Activated T-helper 1 cell treated with anti-CD3 and anti-CD28 coated beads, Interleukin-12 subunit alpha, Interleukin-12 subunit beta, Interleukin-2, Interleukin-4 antibody, amounts not matched to agents 30 ng/mL and 10 ng/mL and 1 ng/mL, durations not matched to agents 14 hours and 24 hours and 36 hours (primary cell): ENCODE measurements at regions of chr12 and their contacts with region 1.

Region 1: GRCh38 chr12:100200463-100201181 is at the start of gene ACTR6:
- DNase-seq: peak; percentile 94
- H3K4me3 Mint-ChIP-seq: peak within 1 kb of the TSS; percentile 100
- H3K27ac Mint-ChIP-seq: peak within 1 kb of the TSS; percentile 100
- H3K4me1 Mint-ChIP-seq: peaks cover 39% of the 10 kb centered on the region
- H3K27me3 Mint-ChIP-seq: no peaks in the 10 kb centered on the region
- total RNA-seq, gene ACTR6: 29.8 and 35.4 TPM in 2 replicates

Region 2: DNA sequence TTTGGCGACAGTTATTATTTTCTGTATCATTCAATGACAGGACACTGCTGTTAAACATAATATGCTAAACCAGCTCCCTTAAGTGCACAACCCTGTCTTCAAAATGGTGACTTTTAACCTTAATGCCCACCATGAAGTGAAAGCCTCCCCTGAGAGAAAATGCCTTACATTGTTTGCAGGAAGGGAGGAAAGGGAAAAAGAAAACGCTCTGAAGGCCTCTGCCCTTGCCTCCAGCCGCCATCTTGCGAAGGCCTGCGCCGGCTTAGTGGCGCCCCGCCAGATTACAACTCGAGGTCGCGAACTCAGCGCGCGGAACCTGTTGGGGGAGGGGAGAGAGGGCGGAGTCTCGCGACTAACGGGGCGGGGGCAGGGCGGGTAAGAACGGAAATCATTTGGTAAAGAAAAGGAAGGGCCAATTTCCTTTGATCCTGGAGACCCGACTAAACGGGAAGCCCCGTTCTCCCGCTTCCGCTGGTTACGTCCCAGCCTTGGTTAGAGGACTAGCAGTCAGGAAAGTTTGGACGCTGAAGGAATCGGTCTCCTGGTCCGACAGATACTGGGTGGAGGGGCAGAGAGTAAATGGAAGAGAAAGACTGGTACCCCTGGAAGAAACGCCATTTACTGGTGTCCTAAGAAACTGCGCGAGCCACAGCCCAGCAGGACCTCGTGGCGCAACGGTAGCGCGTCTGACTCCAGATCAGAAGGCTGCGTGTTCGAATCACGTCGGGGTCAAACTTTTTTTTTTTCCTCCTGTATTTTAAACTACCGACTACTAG is 1696.8 kb before region 1 on chr12:
- intact Hi-C with region 1: loop called (anchors 5 kb)
- DNase-seq: peak; percentile 90
- H3K4me3 Mint-ChIP-seq: peak overlapping the region; percentile 91
- H3K27ac Mint-ChIP-seq: peak overlapping the region; percentile 99
- H3K4me1 Mint-ChIP-seq: peaks cover 27% of the 10 kb centered on the region
- H3K27me3 Mint-ChIP-seq: peaks cover 8% of the 10 kb centered on the region

Region 3: DNA sequence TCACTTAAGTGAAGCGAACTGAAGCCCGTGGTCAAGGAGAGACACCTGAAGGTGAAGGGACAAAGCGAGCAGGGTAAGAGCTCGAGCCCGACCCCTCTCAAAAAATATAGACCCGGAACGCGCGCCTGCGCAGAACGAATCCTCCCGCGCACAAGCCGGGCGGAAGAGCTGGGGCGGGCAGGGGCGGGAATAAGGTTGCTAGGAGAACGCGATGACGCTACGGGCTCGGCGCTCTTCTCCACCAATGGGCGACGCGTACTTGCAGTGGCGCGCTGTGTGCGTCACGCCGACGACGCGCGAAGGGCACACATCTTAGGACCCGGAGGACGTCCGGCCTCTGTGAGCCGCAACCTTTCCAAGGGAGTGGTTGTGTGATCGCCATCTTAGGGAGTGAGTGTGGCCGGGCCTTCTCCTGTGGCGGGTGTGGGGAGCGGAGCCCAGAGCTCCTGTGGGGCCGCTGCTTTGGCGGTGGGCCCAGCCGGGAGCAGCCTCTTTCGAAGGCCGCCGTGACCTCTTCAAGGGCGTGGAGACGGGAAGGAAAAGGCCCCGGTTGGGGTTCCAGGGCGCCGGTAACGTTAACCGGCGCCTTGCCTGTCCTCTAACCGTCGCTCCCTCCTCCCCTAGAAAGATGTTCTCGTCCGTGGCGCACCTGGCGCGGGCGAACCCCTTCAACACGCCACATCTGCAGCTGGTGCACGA is 1607.1 kb before region 1 on chr12 and contains the start of gene SLC25A3:
- intact Hi-C with region 1: loop called (anchors 1 kb)
- DNase-seq: peak; percentile 92
- H3K4me3 Mint-ChIP-seq: peak within 1 kb of the TSS; percentile 96
- H3K27ac Mint-ChIP-seq: peak within 1 kb of the TSS; percentile 99
- H3K4me1 Mint-ChIP-seq: peaks cover 29% of the 10 kb centered on the region
- H3K27me3 Mint-ChIP-seq: no peaks in the 10 kb centered on the region
- total RNA-seq, gene SLC25A3: 570 and 580 TPM in 2 replicates

Region 4: GRCh38 chr12:99352269-99352668 is 848.4 kb before region 1 on chr12:
- intact Hi-C with region 1: no loop called
- DNase-seq: no peak
- H3K4me3 Mint-ChIP-seq: no peak overlapping the region
- H3K27ac Mint-ChIP-seq: no peak overlapping the region
- H3K4me1 Mint-ChIP-seq: no peaks in the 10 kb centered on the region
- H3K27me3 Mint-ChIP-seq: no peaks in the 10 kb centered on the region

Region 5: DNA sequence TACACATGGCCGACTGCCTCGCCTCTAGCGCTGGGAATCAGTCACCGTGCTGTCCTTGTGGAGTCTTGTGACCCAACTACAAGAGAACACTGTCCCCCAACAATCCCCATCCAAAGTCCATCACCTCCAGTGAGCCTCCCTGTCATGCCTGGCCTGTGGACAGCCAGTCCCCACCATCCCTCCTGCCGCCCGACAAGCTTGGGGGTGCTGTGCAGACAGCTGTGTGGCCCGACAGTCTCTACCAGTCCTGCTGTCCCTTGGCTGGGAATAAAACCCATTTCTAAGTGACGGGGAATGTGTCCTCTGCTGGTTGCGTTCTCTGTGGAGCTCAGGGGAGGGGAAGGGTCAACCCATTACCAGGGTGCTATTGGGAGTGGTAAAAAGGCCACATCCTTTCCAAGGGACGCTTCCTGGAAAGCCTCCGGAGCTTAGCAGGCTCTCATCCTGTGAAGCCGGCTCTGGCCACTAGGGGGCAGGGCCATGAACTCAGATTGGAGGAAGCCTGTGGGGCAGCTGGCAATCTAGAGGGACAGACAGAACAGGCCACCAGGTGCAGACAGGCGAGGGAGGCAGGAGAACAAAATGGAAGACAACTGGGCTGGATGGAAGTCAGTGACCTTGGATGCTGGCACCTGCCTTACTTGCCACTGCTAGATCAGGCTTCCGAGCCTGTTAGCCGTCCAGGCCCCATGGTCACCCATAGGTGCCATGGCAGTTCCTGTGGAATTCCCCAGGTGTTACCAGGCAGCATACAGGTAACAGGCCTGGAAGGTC is 46.0 kb before region 1 on chr12:
- intact Hi-C with region 1: loop called (anchors 1 kb)
- DNase-seq: peak; percentile 64
- H3K4me3 Mint-ChIP-seq: no peak overlapping the region
- H3K27ac Mint-ChIP-seq: no peak overlapping the region
- H3K4me1 Mint-ChIP-seq: peaks cover 10% of the 10 kb centered on the region
- H3K27me3 Mint-ChIP-seq: no peaks in the 10 kb centered on the region

Region 6: DNA sequence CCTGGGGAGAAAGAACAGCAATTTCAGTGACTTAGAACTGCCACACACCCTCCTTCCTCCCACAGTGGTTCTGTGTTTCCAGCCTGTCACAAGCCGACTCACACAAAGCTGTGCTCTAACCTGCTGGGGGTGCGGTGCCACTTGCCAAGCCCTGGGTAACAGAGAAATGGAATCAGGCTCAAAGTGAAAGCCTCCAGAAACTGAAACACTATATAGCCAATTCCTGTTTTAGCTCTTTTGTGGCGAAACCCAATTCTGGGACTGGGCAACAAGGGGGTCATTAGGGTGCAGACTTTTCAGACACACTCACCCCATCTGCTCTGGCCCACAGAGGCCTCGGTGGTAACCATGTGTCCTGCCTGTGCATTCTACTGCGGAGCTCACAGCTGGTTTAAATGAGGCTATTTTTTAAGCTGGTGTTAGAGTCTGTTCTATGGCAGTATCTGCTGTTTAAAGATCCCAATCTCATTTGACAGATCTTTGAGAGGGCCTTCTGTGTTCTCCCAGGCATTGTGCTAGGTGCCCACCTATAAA is 15.2 kb before region 1 on chr12:
- intact Hi-C with region 1: loop called (anchors 1 kb)
- DNase-seq: no peak
- H3K4me3 Mint-ChIP-seq: no peak overlapping the region
- H3K27ac Mint-ChIP-seq: no peak overlapping the region
- H3K4me1 Mint-ChIP-seq: peaks cover 42% of the 10 kb centered on the region
- H3K27me3 Mint-ChIP-seq: no peaks in the 10 kb centered on the region

Region 7: DNA sequence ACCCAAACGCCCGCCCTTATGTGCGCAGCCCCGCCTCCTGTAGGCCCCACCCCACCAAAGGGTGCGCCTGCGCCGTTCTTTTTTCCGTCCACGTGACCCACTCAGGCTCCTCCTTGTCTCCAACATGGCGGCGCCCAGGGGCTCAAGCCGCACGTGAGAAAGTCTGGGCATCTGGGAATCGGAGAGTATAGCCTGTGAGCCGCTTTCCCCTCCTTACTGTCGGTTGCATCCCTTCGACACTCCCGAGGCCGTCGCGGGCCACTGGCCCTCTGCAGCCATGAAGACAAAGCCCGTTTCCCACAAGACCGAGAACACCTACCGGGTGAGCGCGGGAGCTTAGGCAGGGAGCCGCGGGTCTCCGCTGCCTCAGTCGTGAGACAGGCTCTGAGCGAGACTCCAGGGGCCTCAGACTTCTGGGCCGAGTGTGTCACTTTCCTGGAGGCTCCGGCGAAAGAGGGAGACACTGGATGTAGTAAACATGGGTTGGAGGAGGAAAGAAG is 1079.4 kb after region 1 on chr12 and contains the start of gene UTP20:
- intact Hi-C with region 1: loop called (anchors 10 kb)
- DNase-seq: peak; percentile 89
- H3K4me3 Mint-ChIP-seq: peak within 1 kb of the TSS; percentile 96
- H3K27ac Mint-ChIP-seq: peak within 1 kb of the TSS; percentile 75
- H3K4me1 Mint-ChIP-seq: peaks cover 22% of the 10 kb centered on the region
- H3K27me3 Mint-ChIP-seq: peaks cover 15% of the 10 kb centered on the region
- total RNA-seq, gene UTP20: 41.8 and 46.0 TPM in 2 replicates